Heart right ventricle (tissue), 16 donors: ENCODE measurements at regions of chr7 and their contacts with region 1.

Region 1: GRCh38 chr7:31228957-31229356 is 111.6 kb downstream of the NEUROD6 start:
- DNase-seq: no peak
- ATAC-seq: no peak
- H3K4me3 ChIP-seq: no peak overlapping the region
- H3K27ac ChIP-seq: no peak overlapping the region
- H3K4me1 ChIP-seq: no peaks in the 10 kb centered on the region
- H3K27me3 ChIP-seq: peaks cover 0 to 6% (median 0%) of the 10 kb centered on the region in 7 donors
- CTCF ChIP-seq: no peak

Region 2: DNA sequence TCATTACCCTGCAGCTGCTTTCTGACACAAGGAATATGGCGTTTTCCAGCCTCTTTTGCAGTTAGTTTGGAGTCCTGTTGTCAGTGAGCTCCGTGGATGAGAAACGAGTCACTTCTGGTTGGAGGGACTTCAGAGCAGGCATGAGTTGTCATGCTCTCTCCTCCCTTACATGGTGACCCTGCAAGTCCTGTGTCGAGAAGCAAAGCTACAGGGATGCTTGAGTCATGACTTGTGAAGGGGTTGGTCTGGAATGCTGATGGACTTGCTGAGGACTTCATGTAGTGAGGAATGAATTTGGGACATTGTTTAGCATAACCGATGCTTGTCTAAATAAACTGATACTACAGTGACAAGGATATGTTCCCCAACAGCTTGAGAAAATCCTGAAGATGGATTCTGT is 68.0 kb before region 1 on chr7:
- intact Hi-C with region 1: loop called in 1 of 10 experiments (anchors 10 kb)
- DNase-seq: no peak
- ATAC-seq: no peak
- H3K4me3 ChIP-seq: no peak overlapping the region
- H3K27ac ChIP-seq: no peak overlapping the region
- H3K4me1 ChIP-seq: no peaks in the 10 kb centered on the region
- H3K27me3 ChIP-seq: peaks cover 0 to 50% (median 5%) of the 10 kb centered on the region in 7 donors
- CTCF ChIP-seq: no peak